Transverse colon (tissue), 4 donors: ENCODE measurements at regions of chr20 and their contacts with region 1.

Region 1: GRCh38 chr20:33291830-33292355 is 8.9 kb downstream of the BPIFB1 start:
- DNase-seq: peak; percentile 33
- H3K4me3 ChIP-seq: no peak overlapping the region
- H3K27ac ChIP-seq: no peak overlapping the region
- H3K4me1 ChIP-seq: no peaks in the 10 kb centered on the region
- H3K27me3 ChIP-seq: peaks cover 24% of the 10 kb centered on the region
- CTCF ChIP-seq: peak; percentile 50 to 82 (median 79)
- EP300 ChIP-seq: no peak
- POLR2A ChIP-seq: no peak

Region 2: GRCh38 chr20:32908334-32909292 is 383.3 kb before region 1 on chr20:
- in situ Hi-C with region 1: loop called in 2 of 4 experiments (anchors 5 to 10 kb)
- intact Hi-C with region 1: loop called (anchors 5 kb)
- DNase-seq: no peak
- H3K4me3 ChIP-seq: no peak overlapping the region
- H3K27ac ChIP-seq: no peak overlapping the region
- H3K4me1 ChIP-seq: no peaks in the 10 kb centered on the region
- H3K27me3 ChIP-seq: no peaks in the 10 kb centered on the region
- CTCF ChIP-seq: no peak
- EP300 ChIP-seq: no peak
- POLR2A ChIP-seq: no peak